Natural killer cell (primary cell): ENCODE measurements at regions of chr7 and their contacts with region 1.

Region 1: GRCh38 chr7:98434095-98434494 is 33.2 kb upstream of the BAIAP2L1 start:
- DNase-seq: no peak
- ATAC-seq: no peak
- H3K4me3 ChIP-seq: no peak overlapping the region
- H3K4me3 Mint-ChIP-seq: no peak overlapping the region
- H3K27ac ChIP-seq: no peak overlapping the region
- H3K27ac Mint-ChIP-seq: peak overlapping the region in 1 of 2 donors; percentile 41
- H3K4me1 ChIP-seq: no peaks in the 10 kb centered on the region
- H3K4me1 Mint-ChIP-seq: peaks cover 7% of the 10 kb centered on the region in 2 donors
- H3K27me3 ChIP-seq: no peaks in the 10 kb centered on the region
- H3K27me3 Mint-ChIP-seq: peaks cover 6 to 13% of the 10 kb centered on the region in 2 donors
- CTCF ChIP-seq: no peak

Region 2: GRCh38 chr7:98745722-98746318 is 311.7 kb after region 1 on chr7:
- intact Hi-C with region 1: loop called (anchors 5 kb)
- DNase-seq: peak; percentile 48 to 77
- ATAC-seq: peak in 2 of 3 donors; percentile 50 to 63
- H3K4me3 ChIP-seq: no peak overlapping the region
- H3K4me3 Mint-ChIP-seq: no peak overlapping the region
- H3K27ac ChIP-seq: no peak overlapping the region
- H3K27ac Mint-ChIP-seq: no peak overlapping the region
- H3K4me1 ChIP-seq: no peaks in the 10 kb centered on the region
- H3K4me1 Mint-ChIP-seq: no peaks in the 10 kb centered on the region
- H3K27me3 ChIP-seq: no peaks in the 10 kb centered on the region
- H3K27me3 Mint-ChIP-seq: peaks cover 0 to 2% of the 10 kb centered on the region in 2 donors
- CTCF ChIP-seq: peak; percentile 68

Region 3: DNA sequence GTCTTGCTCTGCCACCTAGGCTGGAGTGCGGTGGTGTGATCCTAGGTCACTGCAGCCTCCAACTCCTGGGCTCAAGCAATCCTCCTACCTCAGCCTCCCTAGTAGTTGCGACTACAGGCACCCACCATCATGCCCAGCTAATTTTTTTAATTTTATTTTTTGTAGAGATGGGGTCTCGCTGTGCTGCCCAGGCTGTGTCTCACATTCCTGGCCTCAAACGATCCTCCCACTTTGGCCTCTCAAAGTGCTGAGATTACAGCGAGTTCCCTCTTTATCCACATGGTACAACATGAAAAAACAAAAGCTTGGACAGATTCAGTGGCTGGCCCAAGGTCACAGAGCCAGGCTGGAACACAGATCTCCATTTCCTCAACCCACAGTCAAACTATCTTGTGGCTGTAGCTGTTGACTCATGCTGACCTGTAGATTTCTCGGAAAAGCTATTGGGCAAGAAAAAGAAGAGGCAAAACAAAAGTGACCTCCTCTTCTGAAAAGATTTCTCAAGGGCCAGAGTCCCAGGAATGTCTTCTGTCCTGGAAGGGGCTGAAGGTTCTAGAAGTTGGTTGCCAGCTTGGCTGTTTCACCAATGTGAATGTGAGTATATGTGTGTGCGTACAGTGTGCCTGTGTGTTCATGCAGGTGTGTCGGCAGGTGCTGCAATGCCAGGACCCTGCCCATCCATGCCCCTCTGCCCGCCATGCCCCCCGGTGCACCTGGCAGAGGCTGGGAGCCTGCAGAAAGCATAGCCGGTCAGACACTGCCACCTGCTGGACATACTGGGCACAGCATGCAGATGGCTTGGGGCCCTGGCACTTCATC is 407.3 kb after region 1 on chr7:
- intact Hi-C with region 1: loop called (anchors 1 kb)
- DNase-seq: peak; percentile 67 to 80
- ATAC-seq: peak; percentile 69 to 91 (median 80)
- H3K4me3 ChIP-seq: no peak overlapping the region
- H3K4me3 Mint-ChIP-seq: no peak overlapping the region
- H3K27ac ChIP-seq: no peak overlapping the region
- H3K27ac Mint-ChIP-seq: no peak overlapping the region
- H3K4me1 ChIP-seq: no peaks in the 10 kb centered on the region
- H3K4me1 Mint-ChIP-seq: no peaks in the 10 kb centered on the region
- H3K27me3 ChIP-seq: no peaks in the 10 kb centered on the region
- H3K27me3 Mint-ChIP-seq: peaks cover 0 to 3% of the 10 kb centered on the region in 2 donors
- CTCF ChIP-seq: peak; percentile 96

Region 4: GRCh38 chr7:99171731-99172130 is 737.6 kb after region 1 on chr7:
- intact Hi-C with region 1: no loop called
- DNase-seq: no peak
- ATAC-seq: no peak
- H3K4me3 ChIP-seq: no peak overlapping the region
- H3K4me3 Mint-ChIP-seq: no peak overlapping the region
- H3K27ac ChIP-seq: no peak overlapping the region
- H3K27ac Mint-ChIP-seq: no peak overlapping the region
- H3K4me1 ChIP-seq: no peaks in the 10 kb centered on the region
- H3K4me1 Mint-ChIP-seq: no peaks in the 10 kb centered on the region
- H3K27me3 ChIP-seq: no peaks in the 10 kb centered on the region
- H3K27me3 Mint-ChIP-seq: peaks cover 3 to 8% of the 10 kb centered on the region in 2 donors
- CTCF ChIP-seq: no peak